Transverse colon (tissue), 4 donors: ENCODE measurements at regions of chr2 and their contacts with region 1.

Region 1: DNA sequence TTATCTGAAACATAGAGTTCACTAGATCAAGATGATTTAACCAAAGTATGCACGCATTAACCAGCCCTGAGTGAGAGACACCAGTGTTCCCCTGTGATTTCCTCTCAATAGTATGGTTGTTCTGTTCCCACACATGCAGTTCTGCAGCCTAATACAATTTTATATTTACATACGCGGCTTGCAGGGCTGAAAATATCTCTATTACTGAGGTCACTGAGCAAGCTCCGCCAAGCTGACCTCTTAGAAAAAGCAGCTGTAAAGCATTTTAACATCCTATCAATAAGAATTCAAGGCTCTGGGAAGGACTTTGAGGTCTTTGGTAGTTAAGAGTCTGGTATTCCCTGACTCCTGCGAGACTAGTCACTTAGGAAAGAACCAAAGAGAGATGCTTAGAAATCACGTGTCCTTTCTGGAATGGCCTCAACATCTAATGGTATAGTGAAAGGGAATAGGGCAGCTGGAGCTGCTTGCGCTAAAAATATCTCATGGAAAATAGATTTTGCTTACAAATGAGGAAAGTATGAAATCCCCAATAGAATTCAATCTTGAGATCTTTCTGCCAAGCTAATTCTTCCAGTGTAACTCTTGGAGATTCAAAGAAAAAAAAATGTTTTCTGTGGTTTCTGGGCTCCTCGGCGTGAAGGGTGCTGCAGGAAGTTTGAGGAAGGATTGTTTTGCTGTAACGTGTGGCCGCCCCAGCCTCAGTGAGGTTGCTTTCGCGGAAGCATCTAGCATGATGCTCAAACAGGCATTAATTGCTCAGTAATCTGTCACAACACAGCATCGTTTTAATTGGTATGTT is 59.2 kb downstream of the DOCK10 start:
- DNase-seq: peak; percentile 33
- H3K4me3 ChIP-seq: peak overlapping the region in 3 of 4 donors; percentile 0 to 12 (median 10)
- H3K27ac ChIP-seq: peak overlapping the region; percentile 53 to 75 (median 58)
- H3K4me1 ChIP-seq: peaks cover 0 to 12% (median 2%) of the 10 kb centered on the region in 4 donors
- H3K27me3 ChIP-seq: no peaks in the 10 kb centered on the region
- CTCF ChIP-seq: no peak
- EP300 ChIP-seq: no peak
- POLR2A ChIP-seq: no peak

Region 2: DNA sequence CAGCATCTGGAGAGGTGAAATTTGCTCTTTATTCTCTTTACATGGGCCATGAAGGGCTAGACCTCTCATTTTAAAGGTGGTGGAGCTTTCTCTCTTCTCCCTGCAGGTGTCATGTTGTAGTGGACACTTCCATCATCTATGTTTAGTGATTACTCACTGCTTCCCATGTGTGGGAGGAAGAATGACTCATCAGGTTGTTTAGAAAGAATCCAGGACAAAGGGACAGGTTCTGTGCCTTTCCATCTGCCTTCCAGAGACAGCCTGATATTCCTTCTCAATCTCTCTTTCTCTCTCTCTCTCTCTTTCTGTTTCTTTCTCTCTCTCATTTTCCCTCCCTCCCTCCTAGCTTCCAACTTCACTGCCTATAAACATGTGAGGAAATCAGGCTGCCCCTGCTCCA is 1419.6 kb before region 1 on chr2:
- in situ Hi-C with region 1: no loop called
- intact Hi-C with region 1: loop called (anchors 10 kb)
- DNase-seq: no peak
- H3K4me3 ChIP-seq: no peak overlapping the region
- H3K27ac ChIP-seq: no peak overlapping the region
- H3K4me1 ChIP-seq: no peaks in the 10 kb centered on the region
- H3K27me3 ChIP-seq: no peaks in the 10 kb centered on the region
- CTCF ChIP-seq: no peak
- EP300 ChIP-seq: no peak
- POLR2A ChIP-seq: no peak

Region 3: DNA sequence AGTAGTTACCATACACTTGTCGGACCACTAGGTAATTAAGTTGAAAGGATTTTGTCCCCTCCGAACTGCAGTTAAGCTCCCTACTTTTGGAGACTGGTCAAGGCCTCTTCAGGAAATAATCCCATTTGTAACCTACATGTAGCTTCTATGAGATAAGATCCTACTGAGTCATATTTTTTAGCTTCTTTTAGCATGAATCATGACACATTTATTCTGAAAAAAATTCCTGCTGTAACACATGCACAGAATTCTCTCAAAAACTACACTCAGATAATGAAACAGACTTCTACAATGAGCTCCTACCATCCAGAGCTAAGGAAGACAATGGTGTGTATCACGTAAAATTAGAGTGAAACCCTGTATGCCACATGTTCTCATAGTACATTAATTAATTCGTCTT is 166.3 kb before region 1 on chr2:
- in situ Hi-C with region 1: loop called in 1 of 4 experiments (anchors 25 kb)
- intact Hi-C with region 1: no loop called
- DNase-seq: no peak
- H3K4me3 ChIP-seq: no peak overlapping the region
- H3K27ac ChIP-seq: no peak overlapping the region
- H3K4me1 ChIP-seq: no peaks in the 10 kb centered on the region
- H3K27me3 ChIP-seq: no peaks in the 10 kb centered on the region
- CTCF ChIP-seq: no peak
- EP300 ChIP-seq: no peak
- POLR2A ChIP-seq: no peak

Region 4: DNA sequence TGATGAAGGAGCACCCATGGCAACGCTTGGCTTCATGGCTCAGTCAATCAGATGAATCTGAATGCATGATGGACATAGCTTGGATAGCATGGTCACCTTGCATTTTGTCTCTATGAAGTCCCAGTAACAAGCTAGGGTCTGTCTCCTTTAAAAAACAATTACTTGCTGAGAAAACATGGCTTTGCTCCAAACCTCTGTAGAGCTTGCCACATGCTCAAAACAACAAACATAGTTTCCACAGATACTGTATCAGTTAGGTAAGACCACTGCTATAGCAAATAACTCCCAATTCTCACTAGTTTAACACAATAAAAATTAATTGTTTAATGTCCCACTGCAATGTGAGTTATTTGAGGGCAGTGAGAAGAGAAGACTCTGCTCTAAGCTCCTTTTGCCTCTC is 1415.5 kb after region 1 on chr2:
- in situ Hi-C with region 1: no loop called
- intact Hi-C with region 1: no loop called
- DNase-seq: no peak
- H3K4me3 ChIP-seq: no peak overlapping the region
- H3K27ac ChIP-seq: no peak overlapping the region
- H3K4me1 ChIP-seq: no peaks in the 10 kb centered on the region
- H3K27me3 ChIP-seq: no peaks in the 10 kb centered on the region
- CTCF ChIP-seq: no peak
- EP300 ChIP-seq: no peak
- POLR2A ChIP-seq: no peak